ENCODE measurements at regions of chr1 and their contacts with region 1.

Region 1: DNA sequence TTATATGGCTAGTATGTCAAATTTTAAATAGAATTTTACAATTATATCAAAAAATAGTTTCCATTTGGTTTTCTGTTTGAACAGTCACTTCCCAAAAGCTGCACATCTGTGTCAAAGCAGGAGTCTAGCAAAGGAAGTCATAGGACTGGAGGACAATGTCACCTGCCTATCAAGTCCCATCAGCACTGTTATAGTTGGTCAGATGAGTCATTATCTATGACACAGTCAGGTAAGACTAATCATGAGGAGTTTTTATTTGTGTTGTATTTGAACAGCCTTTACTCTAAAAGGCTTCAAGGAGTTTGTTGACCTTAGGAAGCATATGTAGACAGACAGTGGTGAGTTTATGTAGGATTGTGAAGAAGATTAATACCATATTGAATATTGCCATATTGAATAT is 74.2 kb upstream of the QSOX1 start:
- DNase-seq: peak; percentile 1
- ATAC-seq: peak; percentile 70
- H3K4me3 ChIP-seq: no peak overlapping the region
- H3K27ac ChIP-seq: no peak overlapping the region
- H3K4me1 ChIP-seq: 0 out of 4 replicates have a peak, but pooled peaks cover 0 to 5% of the 10 kb centered on the region in 2 experiments
- H3K27me3 ChIP-seq: no peaks in the 10 kb centered on the region
- CTCF ChIP-seq: no peak
- POLR2A ChIP-seq: no peak
- RAD21 ChIP-seq: no peak

Region 2: GRCh38 chr1:180096584-180097332 is 16.3 kb after region 1 on chr1:
- CTCF ChIA-PET with region 1: no interaction called
- POLR2A ChIA-PET with region 1: no interaction called
- RAD21 ChIA-PET with region 1: no interaction called
- intact Hi-C with region 1: loop called (anchors 2 kb)
- DNase-seq: no peak
- ATAC-seq: no peak
- H3K4me3 ChIP-seq: no peak overlapping the region
- H3K27ac ChIP-seq: no peak overlapping the region
- H3K4me1 ChIP-seq: no peaks in the 10 kb centered on the region
- H3K27me3 ChIP-seq: no peaks in the 10 kb centered on the region
- CTCF ChIP-seq: no peak
- POLR2A ChIP-seq: no peak
- RAD21 ChIP-seq: no peak

Measured in HCT116 (cell line).